GM18951 (cell line): ENCODE measurements at regions of chr1 and their contacts with region 1.

Region 1: GRCh38 chr1:970242-970972 is 4.1 kb downstream of the PLEKHN1 start:
- POLR2A ChIP-seq: no peak

Region 2: GRCh38 chr1:902802-903201 is 67.6 kb before region 1 on chr1:
- in situ Hi-C with region 1: no loop called
- POLR2A ChIP-seq: no peak

Region 3: DNA sequence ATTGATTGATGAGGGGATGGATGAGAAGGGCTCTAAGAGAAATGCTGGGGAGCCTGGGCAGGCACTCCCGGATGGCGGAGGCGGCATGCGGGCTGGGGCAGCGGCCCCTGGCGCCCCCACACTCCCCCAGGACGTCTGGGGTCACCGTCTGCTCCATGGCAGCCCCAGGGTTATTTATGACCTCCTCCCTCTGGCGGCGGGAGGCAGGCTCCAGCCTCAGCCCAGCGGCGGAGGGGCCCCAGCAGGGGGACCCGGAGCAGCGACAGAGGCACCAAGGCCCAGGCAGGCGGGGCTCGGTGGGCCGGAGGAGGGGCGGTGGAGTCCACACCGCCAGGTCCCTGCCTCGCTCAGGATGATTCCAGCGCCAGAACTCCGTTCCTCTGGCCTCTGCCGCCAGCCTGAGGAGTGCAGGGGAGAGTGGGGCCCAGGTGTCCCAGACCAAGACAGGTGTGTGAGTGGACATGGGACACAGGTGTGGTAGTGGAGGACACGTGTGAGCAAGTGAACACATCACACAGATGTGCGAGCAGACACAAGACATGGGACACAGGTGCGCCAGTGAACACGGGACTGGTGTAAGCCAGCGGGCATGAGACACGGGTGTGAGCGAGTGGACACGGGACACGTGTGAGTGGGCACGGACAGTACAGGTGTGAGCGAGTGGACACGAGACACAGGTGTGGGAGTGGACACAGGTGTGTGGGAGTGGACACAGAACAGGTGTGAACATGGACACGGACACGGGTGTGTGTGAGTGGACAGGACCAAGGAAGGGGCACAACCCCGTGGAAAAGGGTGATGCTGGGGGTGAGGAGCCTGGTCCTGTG is 49.2 kb before region 1 on chr1:
- in situ Hi-C with region 1: no loop called
- POLR2A ChIP-seq: no peak

Region 4: GRCh38 chr1:1004780-1005697 is 34.6 kb after region 1 on chr1:
- in situ Hi-C with region 1: loop called (anchors 5 kb)
- POLR2A ChIP-seq: no peak

Region 5: GRCh38 chr1:1069061-1069708 is 98.8 kb after region 1 on chr1:
- in situ Hi-C with region 1: no loop called
- POLR2A ChIP-seq: peak; percentile 58